Testis (tissue), 5 donors: ENCODE measurements at regions of chr2 and their contacts with region 1.

Region 1: DNA sequence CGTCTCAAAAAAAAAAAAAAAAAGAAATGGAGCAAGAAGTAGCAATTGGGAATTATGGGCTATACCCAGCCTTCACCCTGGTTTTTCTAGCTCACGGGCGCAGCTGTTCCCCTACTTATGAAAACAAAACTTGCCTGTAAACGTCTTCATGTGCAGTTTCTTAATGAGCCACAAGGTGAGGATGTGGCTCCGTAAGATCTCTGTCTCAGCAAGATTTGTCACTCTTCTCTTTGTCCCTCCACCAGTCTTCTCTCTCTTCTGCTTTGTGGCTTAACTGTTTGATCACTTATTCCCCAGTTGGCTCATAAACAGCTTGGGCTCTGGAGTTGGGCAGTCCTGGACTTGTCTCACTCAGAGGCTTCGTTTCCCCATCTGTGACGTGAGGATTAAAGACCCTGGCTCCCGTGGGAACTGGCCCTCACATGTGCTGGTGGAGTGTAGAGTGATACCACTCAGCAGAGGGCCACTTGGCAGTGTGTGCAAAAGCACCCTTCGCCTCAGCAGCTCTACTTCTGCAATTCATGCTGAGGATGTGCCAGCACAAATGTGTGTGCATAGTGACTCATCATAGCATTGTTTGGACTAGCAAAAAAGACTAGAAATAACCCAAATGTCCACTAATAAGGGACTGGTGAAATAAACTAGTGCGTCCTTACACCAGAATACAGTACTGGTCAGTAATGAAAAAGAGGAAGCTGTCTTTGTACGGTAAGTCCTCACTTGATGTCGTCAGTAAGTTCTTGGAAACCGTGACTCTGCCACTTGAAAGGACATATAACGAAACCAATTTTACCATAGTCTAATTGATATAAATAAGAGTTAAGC is 8.7 kb downstream of the CEP68 start:
- DNase-seq: peak; percentile 53
- H3K4me3 ChIP-seq: no peak overlapping the region
- H3K27ac ChIP-seq: peak overlapping the region; percentile 25 to 31
- H3K4me1 ChIP-seq: peaks cover 41% of the 10 kb centered on the region
- H3K27me3 ChIP-seq: no peaks in the 10 kb centered on the region
- CTCF ChIP-seq: peak; percentile 77 to 92 (median 77)
- POLR2A ChIP-seq: no peak

Region 2: GRCh38 chr2:65164426-65164891 is 99.5 kb after region 1 on chr2:
- intact Hi-C with region 1: loop called (anchors 10 kb)
- DNase-seq: peak; percentile 35
- H3K4me3 ChIP-seq: no peak overlapping the region
- H3K27ac ChIP-seq: peak overlapping the region; percentile 50 to 57
- H3K4me1 ChIP-seq: peaks cover 13% of the 10 kb centered on the region
- H3K27me3 ChIP-seq: no peaks in the 10 kb centered on the region
- CTCF ChIP-seq: no peak
- POLR2A ChIP-seq: no peak